Colonic mucosa (tissue), 4 donors: ENCODE measurements at regions of chr15 and their contacts with region 1.

Region 1: DNA sequence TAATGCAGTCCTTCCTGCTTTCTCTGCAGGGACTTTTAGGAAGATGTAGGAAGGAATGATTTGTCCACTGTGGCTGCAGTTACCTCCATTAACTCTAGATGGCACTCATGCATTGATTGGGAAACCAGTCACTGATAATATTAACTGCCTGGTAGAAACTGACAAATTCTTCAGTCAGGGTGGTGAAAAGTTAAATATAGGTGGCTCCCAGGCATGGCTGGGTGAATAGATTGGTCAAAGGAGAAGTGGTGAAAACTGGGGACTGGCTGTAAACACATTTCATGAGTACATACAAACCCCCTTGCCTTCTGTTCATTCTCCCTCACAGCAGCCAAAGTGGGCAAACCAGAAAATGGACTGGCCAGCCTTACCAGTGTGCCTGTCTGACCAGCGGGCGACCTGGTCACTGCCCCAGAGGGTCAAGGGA is 333.4 kb downstream of the THSD4 start:
- DNase-seq: peak; percentile 53
- H3K4me3 ChIP-seq: no peak overlapping the region
- H3K27ac ChIP-seq: no peak overlapping the region
- H3K4me1 ChIP-seq: peaks cover 5% of the 10 kb centered on the region
- H3K27me3 ChIP-seq: no peaks in the 10 kb centered on the region
- CTCF ChIP-seq: peak; percentile 74

Region 2: DNA sequence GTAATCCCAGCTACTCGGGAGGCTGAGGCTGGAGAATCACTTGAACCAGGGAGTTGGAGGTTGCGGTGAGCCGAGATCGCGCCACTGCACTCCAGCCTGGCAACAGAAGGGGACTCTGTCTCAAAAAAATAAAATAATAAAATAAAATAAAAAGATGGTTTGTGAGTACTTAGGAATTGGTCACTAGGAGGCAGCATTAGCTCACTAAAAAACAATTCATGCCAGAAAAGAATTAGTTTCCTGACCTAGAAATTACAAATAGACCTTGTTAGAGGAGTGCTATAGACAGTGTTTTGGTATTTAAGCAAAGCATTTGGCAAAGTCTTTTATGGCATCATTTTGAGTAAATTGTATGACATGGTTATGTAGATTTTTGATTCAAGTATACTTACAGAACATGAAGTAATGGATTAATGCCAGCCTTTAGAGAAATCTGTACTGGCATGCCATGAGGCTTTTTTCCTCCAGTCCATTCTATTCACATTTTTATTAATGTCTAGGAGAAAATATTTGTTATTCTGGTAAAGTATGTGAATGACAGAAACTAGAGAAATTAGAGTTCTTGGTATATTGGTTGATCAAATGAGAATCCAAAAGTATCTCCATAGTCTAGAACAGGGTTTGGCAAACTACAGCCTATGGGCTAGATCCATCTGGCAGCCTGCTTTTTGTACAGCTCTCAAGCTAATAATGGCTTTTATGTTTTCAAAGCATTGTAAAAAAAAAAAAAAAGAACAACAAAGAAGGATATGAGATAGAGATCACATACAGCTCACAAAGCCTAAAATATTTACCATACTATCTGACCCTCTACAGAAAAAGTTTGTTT is 474.5 kb before region 1 on chr15:
- intact Hi-C with region 1: loop called (anchors 10 kb)
- DNase-seq: no peak
- H3K4me3 ChIP-seq: no peak overlapping the region
- H3K27ac ChIP-seq: no peak overlapping the region
- H3K4me1 ChIP-seq: no peaks in the 10 kb centered on the region
- H3K27me3 ChIP-seq: no peaks in the 10 kb centered on the region
- CTCF ChIP-seq: peak; percentile 22

Region 3: DNA sequence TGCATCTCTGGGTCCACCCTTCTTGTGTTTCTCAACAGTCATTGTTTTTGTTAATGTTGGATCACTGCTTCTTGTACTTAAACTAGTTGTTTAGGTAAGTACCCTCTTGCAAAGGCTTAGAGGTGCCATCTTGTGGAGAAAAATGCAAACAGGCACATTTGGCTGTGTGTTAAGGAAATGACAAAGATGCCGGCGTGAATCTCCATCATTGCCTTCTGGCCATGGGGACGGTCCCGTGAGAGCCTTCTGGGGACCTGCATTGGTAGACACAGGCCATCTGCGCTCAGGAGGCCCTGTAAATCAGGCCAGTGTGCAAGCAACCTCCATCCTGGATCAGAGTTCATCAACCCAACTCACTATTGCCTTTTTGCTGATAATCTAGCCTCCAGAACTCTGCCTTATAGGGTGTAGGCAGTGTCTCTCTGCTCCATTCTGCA is 203.1 kb after region 1 on chr15:
- intact Hi-C with region 1: loop called (anchors 5 kb)
- DNase-seq: peak; percentile 37
- H3K4me3 ChIP-seq: no peak overlapping the region
- H3K27ac ChIP-seq: no peak overlapping the region
- H3K4me1 ChIP-seq: no peaks in the 10 kb centered on the region
- H3K27me3 ChIP-seq: no peaks in the 10 kb centered on the region
- CTCF ChIP-seq: no peak

Region 4: GRCh38 chr15:71730277-71731144 is 281.8 kb after region 1 on chr15:
- intact Hi-C with region 1: loop called (anchors 5 kb)
- DNase-seq: peak; percentile 56
- H3K4me3 ChIP-seq: no peak overlapping the region
- H3K27ac ChIP-seq: no peak overlapping the region
- H3K4me1 ChIP-seq: no peaks in the 10 kb centered on the region
- H3K27me3 ChIP-seq: no peaks in the 10 kb centered on the region
- CTCF ChIP-seq: peak; percentile 66

Region 5: DNA sequence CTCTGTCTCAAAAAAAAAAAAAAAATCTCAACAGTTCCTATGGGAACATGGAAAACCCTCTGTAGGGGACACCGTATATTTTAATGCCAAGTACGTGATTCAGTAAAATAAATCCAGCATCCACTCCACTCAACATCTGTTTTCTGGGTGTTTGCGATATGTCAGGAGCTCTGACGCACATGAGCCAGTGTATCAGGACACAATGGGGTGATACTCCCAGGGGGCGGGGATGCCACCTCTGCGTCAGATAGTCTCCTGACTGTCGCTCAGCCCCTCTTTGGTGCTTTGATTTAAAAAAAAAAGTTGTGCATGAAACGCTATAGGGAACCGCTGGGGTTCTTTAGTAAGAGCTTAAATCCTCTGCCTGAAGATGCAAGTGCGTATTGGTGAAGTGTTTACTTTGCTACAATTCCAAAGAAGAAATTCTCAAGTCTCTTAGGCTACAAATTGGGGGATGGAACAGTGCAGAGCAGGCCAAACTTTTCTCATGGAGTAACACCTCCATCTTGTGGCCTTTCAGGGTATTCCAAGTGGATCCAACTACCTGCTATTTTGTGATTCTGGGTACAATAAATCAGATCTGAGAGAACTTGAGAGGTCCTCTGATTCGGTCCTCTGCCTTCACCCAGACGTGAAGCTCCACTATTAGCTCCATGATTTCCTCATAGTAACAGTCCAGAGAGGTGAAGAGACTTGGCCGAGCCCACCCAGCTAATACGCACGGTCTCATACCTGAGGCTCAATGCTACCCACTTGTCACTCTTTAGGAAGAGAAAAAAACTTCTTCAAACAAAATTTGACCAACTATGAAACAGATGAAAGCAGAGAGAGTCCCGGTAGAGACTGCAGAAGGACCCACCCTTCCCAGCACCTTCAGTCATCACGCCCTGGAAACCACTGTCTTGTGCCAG is 352.4 kb after region 1 on chr15:
- intact Hi-C with region 1: loop called (anchors 5 kb)
- DNase-seq: peak; percentile 59
- H3K4me3 ChIP-seq: no peak overlapping the region
- H3K27ac ChIP-seq: no peak overlapping the region
- H3K4me1 ChIP-seq: no peaks in the 10 kb centered on the region
- H3K27me3 ChIP-seq: no peaks in the 10 kb centered on the region
- CTCF ChIP-seq: peak; percentile 70